Activated CD4-positive, alpha-beta memory T cell treated with anti-CD3 and anti-CD28 coated beads, Interleukin-2, amount 10 ng/mL, durations not matched to agents 7 days and 5 days (primary cell): ENCODE measurements at regions of chr17 and their contacts with region 1.

Region 1: GRCh38 chr17:43940630-43941029 is 1.6 kb downstream of the PPY start:
- DNase-seq: no peak
- H3K4me3 Mint-ChIP-seq: no peak overlapping the region
- H3K27ac Mint-ChIP-seq: no peak overlapping the region
- H3K4me1 Mint-ChIP-seq: peaks cover 21% of the 10 kb centered on the region
- H3K27me3 Mint-ChIP-seq: peaks cover 13% of the 10 kb centered on the region

Region 2: DNA sequence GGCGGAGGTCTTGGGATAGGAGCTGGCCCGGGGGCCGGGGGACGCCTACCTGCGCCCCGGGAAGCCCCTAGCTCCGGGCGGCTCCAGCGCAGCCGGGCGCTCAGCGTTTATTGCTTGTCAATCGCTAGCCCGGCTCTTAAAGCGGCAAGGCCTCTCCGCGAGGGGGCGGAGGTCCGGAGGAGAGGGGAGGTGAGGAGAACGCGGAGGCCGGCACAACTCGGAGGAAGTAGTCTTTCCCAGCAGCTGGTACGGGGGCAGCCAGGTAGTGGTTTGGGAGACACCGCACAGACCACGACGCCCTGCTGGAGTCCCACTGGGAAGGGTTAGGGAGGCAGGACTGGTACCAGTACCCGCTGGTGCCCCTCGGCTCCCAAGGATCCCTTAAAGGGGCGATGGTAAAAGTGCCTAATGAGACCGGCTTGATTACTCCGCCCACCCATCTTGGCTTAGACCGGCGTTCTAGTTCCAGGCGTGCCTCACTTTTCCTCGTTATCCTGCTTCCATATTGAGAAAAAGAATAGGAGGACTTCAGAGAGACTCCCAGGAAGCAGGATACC is 33.1 kb before region 1 on chr17 and contains the start of gene MPP2:
- CTCF ChIA-PET with region 1: interaction called, 25 read pairs
- POLR2A ChIA-PET with region 1: no interaction called
- DNase-seq: peak; percentile 37
- H3K4me3 Mint-ChIP-seq: no peak within 1 kb of the TSS
- H3K27ac Mint-ChIP-seq: no peak within 1 kb of the TSS
- H3K4me1 Mint-ChIP-seq: peaks cover 9% of the 10 kb centered on the region
- H3K27me3 Mint-ChIP-seq: peaks cover 56% of the 10 kb centered on the region
- total RNA-seq, gene MPP2: 0.48 to 0.65 TPM

Region 3: DNA sequence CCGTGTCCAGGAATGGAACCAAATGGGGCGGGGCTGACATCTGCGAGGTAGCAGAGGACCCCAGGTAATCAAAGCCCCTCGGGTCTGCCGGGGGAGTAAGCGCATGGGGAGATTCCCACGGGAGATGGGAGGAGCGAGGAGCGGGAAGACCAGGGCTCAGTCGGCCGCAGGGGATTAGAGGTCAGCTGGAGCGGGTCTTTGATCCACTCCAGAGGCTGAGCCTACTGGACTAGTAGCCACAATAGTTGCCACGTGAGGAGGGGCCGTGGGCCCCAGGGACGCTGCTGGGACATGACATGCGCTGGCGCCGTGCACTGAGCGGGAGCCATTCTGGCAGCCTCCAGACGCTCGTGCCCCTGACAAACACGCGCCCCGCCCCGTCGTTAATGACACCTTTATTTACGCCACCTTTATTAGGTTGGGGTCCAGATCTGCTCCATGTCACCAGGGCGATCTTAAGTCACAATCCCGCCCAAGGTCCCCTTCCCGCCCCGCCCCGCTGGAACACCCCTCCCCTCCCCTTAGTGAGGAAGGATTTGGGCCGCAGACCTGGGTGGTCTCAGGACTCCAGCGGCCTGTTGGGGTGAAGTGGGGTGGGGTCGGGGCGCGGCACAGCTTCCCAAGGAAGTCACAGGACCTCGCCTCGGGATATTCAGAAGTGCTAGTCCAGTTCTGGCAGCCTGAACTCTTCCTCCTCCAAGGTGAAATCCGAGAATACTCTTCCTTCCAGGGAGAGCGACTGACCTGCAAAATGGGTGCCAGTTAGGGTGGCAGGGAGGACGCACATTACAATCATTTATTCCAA is 13.4 kb before region 1 on chr17:
- CTCF ChIA-PET with region 1: interaction called, 17 read pairs
- POLR2A ChIA-PET with region 1: no interaction called
- DNase-seq: no peak
- H3K4me3 Mint-ChIP-seq: peak overlapping the region; percentile 48
- H3K27ac Mint-ChIP-seq: peak overlapping the region; percentile 63
- H3K4me1 Mint-ChIP-seq: peaks cover 36% of the 10 kb centered on the region
- H3K27me3 Mint-ChIP-seq: no peaks in the 10 kb centered on the region

Region 4: DNA sequence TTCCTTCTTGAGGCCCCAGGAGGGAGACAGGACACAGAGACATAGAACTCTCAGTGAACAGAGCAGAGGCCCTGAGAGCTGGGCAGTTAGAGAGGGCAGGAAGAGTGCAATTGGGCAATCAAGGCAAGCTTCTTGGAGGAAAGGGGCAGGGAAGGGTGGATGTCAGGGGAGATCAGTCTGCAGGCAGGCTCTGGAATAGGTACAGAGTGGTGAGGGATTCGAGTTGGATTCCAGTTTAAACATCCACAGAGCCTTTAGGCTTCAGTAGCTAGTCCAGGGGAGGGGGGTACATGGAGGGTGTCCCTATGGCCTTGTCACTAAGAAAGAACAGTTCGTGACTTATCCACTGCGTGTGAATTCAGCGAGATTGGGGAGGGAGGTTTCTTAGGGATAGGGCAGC is 11.1 kb after region 1 on chr17:
- CTCF ChIA-PET with region 1: no interaction called
- POLR2A ChIA-PET with region 1: no interaction called
- DNase-seq: no peak
- H3K4me3 Mint-ChIP-seq: no peak overlapping the region
- H3K27ac Mint-ChIP-seq: no peak overlapping the region
- H3K4me1 Mint-ChIP-seq: peaks cover 7% of the 10 kb centered on the region
- H3K27me3 Mint-ChIP-seq: peaks cover 44% of the 10 kb centered on the region

Region 5: DNA sequence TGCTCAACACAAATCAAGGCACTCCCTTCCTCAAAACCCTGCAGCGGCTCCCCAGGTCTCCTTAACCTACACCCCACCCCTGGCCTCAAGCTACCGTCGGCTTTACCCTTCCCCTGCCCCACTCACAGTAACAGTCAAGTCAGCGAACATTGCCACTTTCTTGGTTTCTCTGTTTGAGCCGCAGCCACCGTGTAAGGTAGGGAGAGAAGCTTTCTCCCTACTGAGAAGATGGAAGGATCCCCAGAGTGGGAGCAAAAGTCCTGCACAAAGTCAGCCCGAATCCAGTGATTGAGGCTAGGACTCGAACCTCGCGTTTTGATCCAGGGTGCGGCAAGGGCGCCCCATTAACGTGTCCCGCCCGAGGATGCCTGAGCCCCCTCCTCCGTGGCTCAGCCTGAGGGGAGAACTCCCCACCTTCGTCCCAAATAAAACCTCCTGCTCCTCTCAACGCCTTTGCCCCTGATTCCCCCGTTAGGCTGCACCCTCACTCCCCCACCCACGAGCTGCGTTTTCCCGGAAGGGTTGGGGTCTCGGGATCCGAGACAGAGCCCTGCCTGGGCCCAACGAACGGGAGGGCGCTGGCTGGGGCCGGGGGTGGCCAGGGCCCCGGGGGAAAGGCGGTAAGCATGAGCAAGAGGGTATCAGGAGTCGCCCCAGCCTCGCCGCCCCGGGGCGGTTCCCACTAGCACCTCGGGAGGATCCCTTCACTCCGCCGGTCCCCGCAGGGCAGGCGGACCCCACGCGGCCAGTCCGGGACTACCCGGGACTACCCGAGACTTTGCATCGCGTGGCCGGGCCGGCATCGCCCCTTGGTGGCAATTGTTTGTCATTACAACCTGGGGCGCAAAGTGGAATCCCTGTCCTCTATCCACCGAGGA is 53.9 kb after region 1 on chr17:
- CTCF ChIA-PET with region 1: interaction called, 30 read pairs
- POLR2A ChIA-PET with region 1: no interaction called
- DNase-seq: peak; percentile 72
- H3K4me3 Mint-ChIP-seq: no peak overlapping the region
- H3K27ac Mint-ChIP-seq: no peak overlapping the region
- H3K4me1 Mint-ChIP-seq: no peaks in the 10 kb centered on the region
- H3K27me3 Mint-ChIP-seq: peaks cover 15% of the 10 kb centered on the region

Region 6: GRCh38 chr17:44006598-44007345 is 66.1 kb after region 1 on chr17:
- CTCF ChIA-PET with region 1: interaction called, 11 read pairs
- POLR2A ChIA-PET with region 1: no interaction called
- DNase-seq: peak; percentile 99
- H3K4me3 Mint-ChIP-seq: peak overlapping the region; percentile 79
- H3K27ac Mint-ChIP-seq: peak overlapping the region; percentile 59
- H3K4me1 Mint-ChIP-seq: peaks cover 36% of the 10 kb centered on the region
- H3K27me3 Mint-ChIP-seq: peaks cover 18% of the 10 kb centered on the region

Region 7: GRCh38 chr17:44044067-44044466 is 103.4 kb after region 1 on chr17:
- CTCF ChIA-PET with region 1: interaction called, 55 read pairs
- POLR2A ChIA-PET with region 1: no interaction called
- DNase-seq: no peak
- H3K4me3 Mint-ChIP-seq: no peak overlapping the region
- H3K27ac Mint-ChIP-seq: no peak overlapping the region
- H3K4me1 Mint-ChIP-seq: peaks cover 35% of the 10 kb centered on the region
- H3K27me3 Mint-ChIP-seq: no peaks in the 10 kb centered on the region

Region 8: DNA sequence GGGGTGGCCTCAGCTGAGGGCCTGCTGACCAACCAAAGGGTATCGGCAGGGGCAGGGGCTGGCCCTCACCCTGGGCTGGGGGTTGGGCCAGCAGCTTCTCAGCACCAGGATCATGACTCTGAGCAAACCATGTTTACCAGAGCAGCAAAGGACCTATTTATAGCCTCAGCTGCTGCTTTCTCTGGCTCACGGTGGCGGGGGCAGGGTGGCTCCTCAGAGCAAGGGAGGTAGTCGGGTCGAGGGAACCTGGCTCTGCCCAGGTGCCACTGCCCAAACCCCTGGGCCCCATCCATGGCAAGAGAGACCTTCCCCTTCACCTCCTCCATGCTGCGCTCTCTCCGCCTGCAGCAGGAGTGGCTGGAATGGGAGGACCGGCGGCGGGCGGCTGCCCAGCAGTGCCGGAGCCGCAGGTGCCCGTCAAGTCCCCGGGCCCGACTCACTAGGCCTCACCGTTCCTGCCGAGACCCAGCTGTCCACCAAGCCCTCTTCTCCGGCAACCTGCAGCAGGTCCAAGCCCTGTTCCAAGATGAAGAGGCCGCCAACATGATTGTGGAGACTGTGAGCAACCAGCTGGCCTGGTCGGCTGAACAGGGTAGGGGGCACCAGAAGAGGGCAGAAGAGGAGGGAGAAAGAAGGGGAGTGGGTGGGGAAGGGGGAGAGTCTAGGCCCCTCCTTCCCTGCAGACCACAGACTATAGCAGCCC is 230.0 kb after region 1 on chr17 and contains the start of gene ASB16:
- CTCF ChIA-PET with region 1: interaction called, 16 read pairs
- POLR2A ChIA-PET with region 1: interaction called, 3 read pairs
- DNase-seq: no peak
- H3K4me3 Mint-ChIP-seq: no peak within 1 kb of the TSS
- H3K27ac Mint-ChIP-seq: no peak within 1 kb of the TSS
- H3K4me1 Mint-ChIP-seq: peaks cover 5% of the 10 kb centered on the region
- H3K27me3 Mint-ChIP-seq: no peaks in the 10 kb centered on the region
- total RNA-seq, gene ASB16: 0.38 TPM in 1 of 2 experiments, not detected in the other